Activated CD4-positive, alpha-beta memory T cell treated with anti-CD3 and anti-CD28 coated beads, Interleukin-2, amount 10 ng/mL, durations not matched to agents 7 days and 5 days (primary cell): ENCODE measurements at regions of chr11 and their contacts with region 1.

Region 1: GRCh38 chr11:118227865-118228785 is 3.3 kb upstream of the JAML start:
- DNase-seq: peak; percentile 63
- H3K4me3 Mint-ChIP-seq: peak overlapping the region; percentile 43
- H3K27ac Mint-ChIP-seq: no peak overlapping the region
- H3K4me1 Mint-ChIP-seq: peaks cover 31% of the 10 kb centered on the region
- H3K27me3 Mint-ChIP-seq: no peaks in the 10 kb centered on the region

Region 2: GRCh38 chr11:118216621-118217481 is 11.3 kb before region 1 on chr11:
- CTCF ChIA-PET with region 1: interaction called, 30 read pairs
- POLR2A ChIA-PET with region 1: interaction called, 97 read pairs
- DNase-seq: peak; percentile 57
- H3K4me3 Mint-ChIP-seq: peak overlapping the region; percentile 74
- H3K27ac Mint-ChIP-seq: peak overlapping the region; percentile 94
- H3K4me1 Mint-ChIP-seq: peaks cover 96% of the 10 kb centered on the region
- H3K27me3 Mint-ChIP-seq: no peaks in the 10 kb centered on the region

Region 3: DNA sequence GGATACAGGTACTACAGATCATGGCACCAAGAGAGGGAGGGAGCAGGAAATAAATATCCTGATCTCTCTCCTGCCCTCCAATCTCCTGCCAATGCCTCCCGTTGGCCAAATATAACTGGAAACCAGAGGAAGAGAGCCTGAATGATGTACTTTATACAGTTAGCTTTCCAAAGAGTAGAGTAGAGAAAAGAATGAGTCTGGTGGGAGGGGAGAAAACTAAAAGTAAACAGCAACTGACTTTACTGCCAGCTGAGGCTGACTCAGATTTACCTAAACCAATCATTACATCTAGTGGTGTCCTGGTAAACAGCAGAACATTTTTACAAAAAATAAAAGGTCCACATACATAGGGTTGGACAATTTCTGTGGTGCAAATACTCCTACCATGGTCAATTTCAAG is 18.9 kb after region 1 on chr11:
- CTCF ChIA-PET with region 1: interaction called, 7 read pairs
- POLR2A ChIA-PET with region 1: interaction called, 96 read pairs
- DNase-seq: no peak
- H3K4me3 Mint-ChIP-seq: peak overlapping the region; percentile 3
- H3K27ac Mint-ChIP-seq: peak overlapping the region; percentile 81
- H3K4me1 Mint-ChIP-seq: peaks cover 78% of the 10 kb centered on the region
- H3K27me3 Mint-ChIP-seq: no peaks in the 10 kb centered on the region

Region 4: DNA sequence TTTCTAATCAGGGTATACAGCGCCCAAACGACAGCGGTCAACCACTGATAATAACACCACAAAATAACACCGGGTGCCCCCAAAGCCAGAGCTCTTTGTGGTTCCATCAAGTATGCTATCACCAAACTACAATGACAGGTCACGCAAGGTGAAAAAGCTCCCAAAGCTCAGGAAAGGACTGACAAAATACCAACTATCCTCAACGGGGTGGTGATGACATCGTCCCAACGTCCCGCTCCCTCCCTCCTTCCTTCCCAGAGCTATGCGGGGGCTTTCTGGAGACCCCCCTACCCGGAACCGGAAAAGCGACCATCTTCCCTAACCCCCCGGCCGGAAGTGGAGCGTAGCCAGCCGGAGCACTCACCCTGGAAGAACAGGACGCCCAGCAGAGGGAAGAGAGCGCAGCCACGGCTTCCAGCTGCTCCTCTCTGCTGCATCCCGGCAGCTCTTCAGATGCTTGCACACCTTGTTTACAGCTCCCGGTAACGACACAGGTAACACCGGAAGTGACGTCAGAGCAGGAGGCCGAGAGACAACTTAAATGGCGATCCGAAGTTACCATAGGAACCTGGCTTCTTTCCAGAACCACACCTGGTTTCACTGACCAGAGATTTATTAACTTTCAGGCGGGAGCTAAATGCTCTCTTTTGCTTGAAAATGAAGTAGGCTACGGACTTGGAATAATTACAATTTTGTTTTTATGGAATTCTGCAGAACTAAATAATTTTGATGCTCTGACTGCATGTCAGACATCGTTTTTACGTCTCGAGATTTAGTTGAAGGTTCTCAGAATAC is 23.9 kb after region 1 on chr11 and contains the start of gene MPZL3:
- CTCF ChIA-PET with region 1: interaction called, 5 read pairs
- POLR2A ChIA-PET with region 1: interaction called, 25 read pairs
- DNase-seq: peak; percentile 82
- H3K4me3 Mint-ChIP-seq: peak within 1 kb of the TSS; percentile 93
- H3K27ac Mint-ChIP-seq: peak within 1 kb of the TSS; percentile 93
- H3K4me1 Mint-ChIP-seq: peaks cover 44% of the 10 kb centered on the region
- H3K27me3 Mint-ChIP-seq: no peaks in the 10 kb centered on the region
- total RNA-seq, gene MPZL3: 34.0 to 34.9 TPM